Activated CD8-positive, alpha-beta T cell treated with anti-CD3 and anti-CD28 coated beads for 36 hours (primary cell): ENCODE measurements at regions of chr13 and their contacts with region 1.

Region 1: GRCh38 chr13:39037880-39038568 is at the starts of genes NHLRC3 and PROSER1:
- DNase-seq: peak; percentile 93
- ATAC-seq: peak; percentile 87
- H3K4me3 Mint-ChIP-seq: peak within 1 kb of the TSS; percentile 100
- H3K27ac Mint-ChIP-seq: peak within 1 kb of the TSS; percentile 99
- H3K4me1 Mint-ChIP-seq: peaks cover 45% of the 10 kb centered on the region
- H3K27me3 Mint-ChIP-seq: no peaks in the 10 kb centered on the region
- CTCF ChIP-seq: no peak
- total RNA-seq, gene NHLRC3: 17.5 to 17.9 TPM
- total RNA-seq, gene PROSER1: 88.7 to 108 TPM

Region 2: GRCh38 chr13:39016787-39017186 is 21.2 kb before region 1 on chr13:
- CTCF ChIA-PET with region 1: interaction called, 16 read pairs
- POLR2A ChIA-PET with region 1: interaction called, 7 read pairs
- intact Hi-C with region 1: no loop called
- DNase-seq: peak; percentile 50
- ATAC-seq: peak; percentile 76
- H3K4me3 Mint-ChIP-seq: no peak overlapping the region
- H3K27ac Mint-ChIP-seq: peak overlapping the region; percentile 68
- H3K4me1 Mint-ChIP-seq: peaks cover 7% of the 10 kb centered on the region
- H3K27me3 Mint-ChIP-seq: no peaks in the 10 kb centered on the region
- CTCF ChIP-seq: peak; percentile 67